Breast epithelium (tissue), 4 donors: ENCODE measurements at regions of chr12 and their contacts with region 1.

Region 1: DNA sequence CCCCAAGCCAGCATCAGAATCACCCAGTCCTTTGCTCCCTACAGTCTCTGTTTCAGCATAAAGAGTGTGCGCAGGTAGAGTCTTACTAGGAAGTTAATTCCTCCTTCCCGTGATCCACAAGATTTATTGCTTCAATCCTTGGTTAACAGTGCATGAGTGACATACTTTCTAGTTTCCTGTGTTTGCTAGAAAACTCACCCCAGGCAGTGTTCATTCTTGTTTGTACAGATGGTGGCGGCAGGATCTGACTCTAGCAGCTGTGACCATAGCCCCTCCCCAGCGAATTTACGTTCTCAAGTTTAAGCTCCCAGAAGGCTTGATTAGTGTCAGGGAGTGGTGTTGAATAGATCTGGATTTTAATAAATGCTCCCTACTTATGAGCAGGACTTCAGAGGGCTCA is 75.9 kb upstream of the ANO2 start:
- DNase-seq: no peak
- H3K4me3 ChIP-seq: no peak overlapping the region
- H3K27ac ChIP-seq: no peak overlapping the region
- H3K4me1 ChIP-seq: no peaks in the 10 kb centered on the region
- H3K27me3 ChIP-seq: no peaks in the 10 kb centered on the region
- CTCF ChIP-seq: no peak
- POLR2A ChIP-seq: no peak

Region 2: DNA sequence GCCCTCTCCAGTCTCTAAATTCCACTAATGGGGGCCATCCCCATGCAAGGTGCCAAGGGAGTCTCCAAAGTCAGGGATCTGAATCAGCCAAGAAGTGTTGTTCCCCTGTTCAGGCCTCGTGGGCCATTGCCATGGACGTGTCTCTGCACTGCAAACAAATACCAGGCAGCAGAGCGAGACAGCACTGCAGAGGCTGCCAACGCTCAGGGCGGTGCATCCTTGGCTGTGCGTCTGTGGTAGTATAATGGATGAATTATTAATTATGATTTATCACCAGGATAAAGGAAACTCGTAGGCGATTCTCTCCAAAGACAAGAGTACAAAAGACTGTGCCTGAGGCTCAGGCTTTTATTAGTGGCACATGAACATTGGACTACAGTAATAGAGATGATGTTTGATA is 711.3 kb before region 1 on chr12:
- intact Hi-C with region 1: loop called (anchors 10 kb)
- DNase-seq: peak; percentile 69 to 81
- H3K4me3 ChIP-seq: no peak overlapping the region
- H3K27ac ChIP-seq: no peak overlapping the region
- H3K4me1 ChIP-seq: no peaks in the 10 kb centered on the region
- H3K27me3 ChIP-seq: peaks cover 0 to 15% of the 10 kb centered on the region in 2 donors
- CTCF ChIP-seq: no peak
- POLR2A ChIP-seq: no peak

Region 3: DNA sequence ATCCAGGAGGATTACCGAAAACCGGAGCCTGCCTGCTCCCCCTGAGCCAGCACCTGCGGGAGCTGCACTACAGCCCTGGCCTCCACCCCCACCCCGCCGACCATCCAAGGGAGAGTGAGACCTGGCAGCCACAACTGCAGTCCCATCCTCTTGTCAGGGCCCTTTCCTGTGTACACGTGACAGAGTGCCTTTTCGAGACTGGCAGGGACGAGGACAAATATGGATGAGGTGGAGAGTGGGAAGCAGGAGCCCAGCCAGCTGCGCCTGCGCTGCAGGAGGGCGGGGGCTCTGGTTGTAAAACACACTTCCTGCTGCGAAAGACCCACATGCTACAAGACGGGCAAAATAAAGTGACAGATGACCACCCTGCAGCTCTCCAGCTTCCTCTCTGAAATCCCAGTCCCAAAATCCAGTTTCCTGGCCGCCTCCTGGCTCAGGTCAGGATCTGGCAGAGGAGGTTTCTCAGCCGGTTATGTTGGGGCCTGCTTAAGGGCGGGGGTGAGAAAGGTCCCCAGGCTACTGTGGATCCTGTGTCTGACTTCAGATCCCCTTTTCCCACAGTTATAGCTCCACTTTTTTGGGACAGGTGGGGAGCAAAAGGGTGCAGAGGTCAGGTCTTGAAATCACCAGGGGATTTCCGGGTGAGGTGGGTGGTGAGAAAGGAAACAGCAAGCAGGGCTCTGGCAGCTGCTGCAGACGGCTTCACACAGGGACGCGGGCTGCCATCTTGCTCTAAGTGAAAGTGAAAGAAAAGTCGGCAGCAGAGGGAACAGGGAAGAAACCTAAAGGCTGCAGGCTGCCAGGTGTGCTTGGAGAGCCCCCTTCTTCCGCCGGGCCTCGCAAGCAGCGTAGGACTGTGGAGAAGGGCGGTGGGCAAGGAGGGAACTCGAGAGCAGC is 430.7 kb after region 1 on chr12 and contains the start of gene TAPBPL:
- intact Hi-C with region 1: no loop called
- DNase-seq: peak; percentile 77 to 81
- H3K4me3 ChIP-seq: peak within 1 kb of the TSS; percentile 66 to 78 (median 76)
- H3K27ac ChIP-seq: peak within 1 kb of the TSS; percentile 95
- H3K4me1 ChIP-seq: peaks cover 7 to 11% of the 10 kb centered on the region in 2 donors
- H3K27me3 ChIP-seq: no peaks in the 10 kb centered on the region
- CTCF ChIP-seq: no peak
- POLR2A ChIP-seq: no peak
- total RNA-seq, gene TAPBPL: 16.5 to 24.6 (median 22.9) TPM